H1 (cell line): ENCODE measurements at regions of chr6 and their contacts with region 1.

Region 1: DNA sequence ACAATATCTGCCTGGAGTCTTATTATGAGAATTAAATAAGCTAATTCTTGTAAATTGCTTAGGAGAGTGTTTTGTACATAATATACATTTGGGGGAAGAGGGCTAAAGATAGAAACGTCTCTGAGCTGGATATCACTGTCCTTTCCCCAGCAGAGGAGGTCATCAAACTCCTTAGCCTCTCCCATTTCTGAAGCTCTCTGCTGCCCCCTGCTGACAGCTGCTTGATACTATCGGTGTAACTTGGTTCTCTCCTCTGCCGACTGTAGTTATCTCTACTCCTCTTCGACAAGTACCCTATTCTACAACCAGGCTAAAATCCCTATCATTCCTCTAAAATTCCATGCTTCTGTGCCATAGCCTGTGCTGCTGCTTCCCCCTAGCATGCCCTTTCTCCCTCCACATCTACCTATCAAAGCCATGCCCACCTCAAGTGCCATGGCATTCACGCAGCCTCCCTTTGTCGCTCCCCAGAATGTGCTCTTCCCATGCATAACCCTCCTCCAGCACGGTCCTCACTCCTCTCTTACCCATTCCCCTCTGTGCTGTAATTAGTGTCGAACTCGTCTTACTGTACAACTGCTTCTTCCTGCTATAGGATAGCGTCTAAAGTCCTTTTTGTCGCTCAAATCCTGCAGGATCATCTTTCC is 101.2 kb downstream of the EPM2A start:
- DNase-seq: peak; percentile 39 to 97
- H3K4me3 ChIP-seq: no peak overlapping the region; a peak in 1 of 8 replicates
- H3K27ac ChIP-seq: no peak overlapping the region
- H3K4me1 ChIP-seq: no peaks in the 10 kb centered on the region; a peak in 2 of 7 replicates
- H3K27me3 ChIP-seq: no peaks in the 10 kb centered on the region
- CTCF ChIP-seq: peak; percentile 50 to 84 (median 80)
- EP300 ChIP-seq: no peak
- POLR2A ChIP-seq: no peak
- RAD21 ChIP-seq: peak; percentile 91 to 93

Region 2: GRCh38 chr6:145608850-145609249 is 25.3 kb before region 1 on chr6:
- CTCF ChIA-PET with region 1: interaction called, 12 read pairs
- POLR2A ChIA-PET with region 1: no interaction called
- DNase-seq: no peak
- H3K4me3 ChIP-seq: no peak overlapping the region
- H3K27ac ChIP-seq: no peak overlapping the region
- H3K4me1 ChIP-seq: no peaks in the 10 kb centered on the region
- H3K27me3 ChIP-seq: no peaks in the 10 kb centered on the region
- CTCF ChIP-seq: no peak
- EP300 ChIP-seq: no peak
- POLR2A ChIP-seq: no peak
- RAD21 ChIP-seq: no peak

Region 3: GRCh38 chr6:145621776-145622175 is 12.3 kb before region 1 on chr6:
- CTCF ChIA-PET with region 1: interaction called, 13 read pairs
- POLR2A ChIA-PET with region 1: no interaction called
- DNase-seq: no peak
- H3K4me3 ChIP-seq: no peak overlapping the region
- H3K27ac ChIP-seq: no peak overlapping the region
- H3K4me1 ChIP-seq: no peaks in the 10 kb centered on the region
- H3K27me3 ChIP-seq: no peaks in the 10 kb centered on the region
- CTCF ChIP-seq: no peak
- EP300 ChIP-seq: no peak
- POLR2A ChIP-seq: no peak
- RAD21 ChIP-seq: no peak

Region 4: GRCh38 chr6:145756146-145756662 is 122.1 kb after region 1 on chr6:
- CTCF ChIA-PET with region 1: no interaction called
- POLR2A ChIA-PET with region 1: no interaction called
- DNase-seq: no peak
- H3K4me3 ChIP-seq: no peak overlapping the region
- H3K27ac ChIP-seq: no peak overlapping the region
- H3K4me1 ChIP-seq: no peaks in the 10 kb centered on the region
- H3K27me3 ChIP-seq: no peaks in the 10 kb centered on the region
- CTCF ChIP-seq: no peak
- EP300 ChIP-seq: no peak
- POLR2A ChIP-seq: no peak
- RAD21 ChIP-seq: no peak